ENCODE measurements at regions of chrX and their contacts with region 1.

Region 1: DNA sequence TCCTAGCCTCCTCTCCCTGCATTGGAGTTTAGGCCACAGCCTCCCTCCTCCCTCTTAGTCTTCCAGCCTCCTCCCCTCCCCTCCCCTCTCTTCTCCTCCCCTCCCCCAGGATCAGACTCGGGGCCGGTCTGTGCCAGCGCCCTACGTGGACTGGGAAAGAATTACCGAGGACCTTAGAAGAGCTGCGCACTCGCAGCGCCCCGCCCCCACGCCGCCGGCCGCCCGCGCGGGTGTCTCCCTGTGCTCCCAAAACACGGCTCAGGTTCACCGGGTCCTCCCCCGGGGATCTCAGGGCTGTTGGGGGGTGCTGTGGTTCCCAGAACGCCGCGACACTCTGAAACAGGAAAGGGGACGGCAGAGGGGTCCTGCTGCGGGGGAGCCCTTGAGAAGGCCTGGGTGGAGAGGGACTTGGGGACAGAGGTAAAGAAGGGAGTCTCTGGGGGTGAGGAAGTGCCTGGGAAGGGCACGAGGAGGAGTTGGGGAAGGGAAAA is 122.3 kb upstream of the TBL1X start:
- DNase-seq: no peak
- H3K4me3 ChIP-seq: no peak overlapping the region
- H3K27ac ChIP-seq: no peak overlapping the region
- H3K27me3 ChIP-seq: no peaks in the 10 kb centered on the region
- CTCF ChIP-seq: no peak

Region 2: GRCh38 chrX:8969378-8969777 is 373.2 kb before region 1 on chrX:
- CTCF ChIA-PET with region 1: interaction called, 10 read pairs
- POLR2A ChIA-PET with region 1: no interaction called
- DNase-seq: no peak
- H3K4me3 ChIP-seq: no peak overlapping the region
- H3K27ac ChIP-seq: no peak overlapping the region
- H3K27me3 ChIP-seq: no peaks in the 10 kb centered on the region
- CTCF ChIP-seq: no peak

Measured in AG04450 (cell line).